HEK293 (cell line): ENCODE measurements at regions of chr2 and their contacts with region 1.

Region 1: DNA sequence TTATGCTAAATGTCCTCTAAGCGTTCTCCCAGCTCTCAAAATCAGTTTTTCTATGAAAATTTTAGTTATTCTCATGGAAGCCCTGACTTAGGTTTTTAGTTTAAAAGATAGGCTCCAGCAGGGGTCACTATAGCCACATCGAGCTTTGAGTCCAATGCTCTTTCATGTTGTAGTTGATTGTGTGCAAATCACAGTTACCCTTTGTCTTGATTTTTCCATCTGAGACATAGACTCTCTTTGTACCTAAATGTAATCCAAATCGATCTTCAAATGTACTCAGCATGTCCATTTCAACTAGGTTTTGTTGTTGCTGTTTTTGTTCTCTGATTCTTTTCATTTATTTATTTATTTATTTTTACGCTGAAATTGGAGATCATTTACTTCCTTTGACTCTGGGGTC is 26.4 kb upstream of the MSTN start:
- H3K4me3 ChIP-seq: no peak overlapping the region
- H3K27ac ChIP-seq: no peak overlapping the region
- H3K4me1 ChIP-seq: no peaks in the 10 kb centered on the region
- CTCF ChIP-seq: peak; percentile 58; the same call in 1 of the 2 replicates

Region 2: GRCh38 chr2:189860161-189860560 is 228.8 kb before region 1 on chr2:
- CTCF ChIA-PET with region 1: no interaction called
- POLR2A ChIA-PET with region 1: no interaction called
- H3K4me3 ChIP-seq: no peak overlapping the region
- H3K27ac ChIP-seq: no peak overlapping the region
- H3K4me1 ChIP-seq: no peaks in the 10 kb centered on the region
- CTCF ChIP-seq: no peak

Region 3: GRCh38 chr2:190017837-190018236 is 71.1 kb before region 1 on chr2:
- CTCF ChIA-PET with region 1: no interaction called
- POLR2A ChIA-PET with region 1: no interaction called
- H3K4me3 ChIP-seq: no peak overlapping the region
- H3K27ac ChIP-seq: no peak overlapping the region
- H3K4me1 ChIP-seq: no peaks in the 10 kb centered on the region
- CTCF ChIP-seq: no peak

Region 4: GRCh38 chr2:190099890-190100697 is 11.2 kb after region 1 on chr2:
- CTCF ChIA-PET with region 1: interaction called, 14 read pairs
- POLR2A ChIA-PET with region 1: no interaction called
- H3K4me3 ChIP-seq: no peak overlapping the region
- H3K27ac ChIP-seq: no peak overlapping the region
- H3K4me1 ChIP-seq: no peaks in the 10 kb centered on the region
- CTCF ChIP-seq: no peak

Region 5: GRCh38 chr2:190137561-190137960 is 48.6 kb after region 1 on chr2:
- CTCF ChIA-PET with region 1: no interaction called
- POLR2A ChIA-PET with region 1: no interaction called
- H3K4me3 ChIP-seq: no peak overlapping the region
- H3K27ac ChIP-seq: no peak overlapping the region
- H3K4me1 ChIP-seq: no peaks in the 10 kb centered on the region
- CTCF ChIP-seq: no peak

Region 6: DNA sequence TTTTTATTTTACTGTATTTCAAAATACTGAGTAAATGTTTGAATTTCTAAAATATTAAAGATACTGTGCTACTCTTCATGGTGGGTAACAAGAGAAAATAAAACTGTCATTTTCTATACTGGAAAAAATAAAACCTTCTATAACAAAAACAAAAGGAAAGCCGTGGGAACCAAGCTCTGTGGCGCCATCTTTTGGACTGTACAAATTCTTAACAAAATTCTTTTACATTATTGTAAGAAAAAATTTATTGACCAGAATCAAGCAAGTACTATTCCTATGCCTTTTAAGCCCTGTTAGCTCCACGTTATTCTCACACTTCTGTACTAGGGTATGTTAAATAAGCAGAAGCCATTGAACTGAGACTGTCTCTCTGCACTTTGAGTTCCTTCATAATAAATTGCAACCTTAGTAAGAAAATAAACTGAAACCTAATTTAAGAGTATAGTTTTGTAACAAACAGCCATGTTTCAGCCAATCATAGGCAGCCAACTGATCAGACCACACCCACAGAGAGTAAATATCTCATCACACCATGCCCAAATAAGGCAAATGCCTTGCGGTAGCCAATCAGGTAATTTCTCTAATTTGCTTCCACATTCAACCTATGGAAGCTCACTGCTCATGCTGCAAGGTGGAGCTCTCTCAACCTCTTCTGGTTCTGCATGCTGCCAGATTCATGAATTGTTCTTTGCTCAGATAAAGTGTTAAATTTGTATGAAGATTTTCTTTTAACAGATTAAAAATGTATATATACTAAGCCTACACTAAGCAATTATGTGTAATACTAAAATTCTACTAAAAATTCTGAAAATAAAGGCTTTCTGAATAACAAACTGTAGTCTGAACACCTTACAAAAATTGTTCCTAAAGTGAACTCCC is 188.6 kb after region 1 on chr2:
- CTCF ChIA-PET with region 1: interaction called, 21 read pairs
- POLR2A ChIA-PET with region 1: no interaction called
- H3K4me3 ChIP-seq: no peak overlapping the region
- H3K27ac ChIP-seq: no peak overlapping the region
- H3K4me1 ChIP-seq: no peaks in the 10 kb centered on the region
- CTCF ChIP-seq: no peak